ENCODE measurements at regions of chr11 and their contacts with region 1.

Region 1: GRCh38 chr11:6635082-6635932 is 16.1 kb upstream of the TPP1 start:
- DNase-seq: peak; percentile 98
- H3K4me3 ChIP-seq: peak overlapping the region in 1 of 3 experiments; percentile 37
- H3K27ac ChIP-seq: peak overlapping the region; percentile 91
- H3K4me1 ChIP-seq: peaks cover 47% of the 10 kb centered on the region
- H3K27me3 ChIP-seq: no peaks in the 10 kb centered on the region
- CTCF ChIP-seq: no peak
- POLR2A ChIP-seq: peak; percentile 83

Region 2: GRCh38 chr11:6481012-6481923 is 154.0 kb before region 1 on chr11 and contains the starts of genes ARFIP2 and TIMM10B:
- CTCF ChIA-PET with region 1: no interaction called
- POLR2A ChIA-PET with region 1: no interaction called
- dilution Hi-C with region 1: no loop called
- intact Hi-C with region 1: no loop called
- DNase-seq: peak; percentile 98
- H3K4me3 ChIP-seq: peak within 1 kb of the TSS; percentile 19 to 65 (median 57)
- H3K27ac ChIP-seq: peak within 1 kb of the TSS; percentile 72
- H3K4me1 ChIP-seq: peaks cover 18% of the 10 kb centered on the region
- H3K27me3 ChIP-seq: no peaks in the 10 kb centered on the region
- CTCF ChIP-seq: no peak
- POLR2A ChIP-seq: peak; percentile 70
- total RNA-seq, gene ARFIP2: 46.7 and 48.4 TPM in 2 replicates
- total RNA-seq, gene TIMM10B: 29.2 and 31.3 TPM in 2 replicates

Region 3: GRCh38 chr11:6568191-6568918 is 67.0 kb before region 1 on chr11:
- CTCF ChIA-PET with region 1: no interaction called
- POLR2A ChIA-PET with region 1: no interaction called
- dilution Hi-C with region 1: no loop called
- intact Hi-C with region 1: loop called (anchors 1 kb)
- DNase-seq: peak; percentile 66
- H3K4me3 ChIP-seq: no peak overlapping the region
- H3K27ac ChIP-seq: no peak overlapping the region
- H3K4me1 ChIP-seq: peaks cover 6% of the 10 kb centered on the region
- H3K27me3 ChIP-seq: no peaks in the 10 kb centered on the region
- CTCF ChIP-seq: no peak
- POLR2A ChIP-seq: no peak

Region 4: GRCh38 chr11:6612213-6613041 is 22.9 kb before region 1 on chr11 and contains the start of gene TAF10:
- CTCF ChIA-PET with region 1: interaction called, 8 read pairs
- POLR2A ChIA-PET with region 1: no interaction called
- dilution Hi-C with region 1: no loop called
- intact Hi-C with region 1: loop called (anchors 1 kb)
- DNase-seq: peak; percentile 97
- H3K4me3 ChIP-seq: peak within 1 kb of the TSS; percentile 28 to 72 (median 71)
- H3K27ac ChIP-seq: peak within 1 kb of the TSS; percentile 89
- H3K4me1 ChIP-seq: peaks cover 57% of the 10 kb centered on the region
- H3K27me3 ChIP-seq: no peaks in the 10 kb centered on the region
- CTCF ChIP-seq: peak; percentile 41 to 49
- POLR2A ChIP-seq: peak; percentile 92
- total RNA-seq, gene TAF10: 86.2 and 105 TPM in 2 replicates

Region 5: GRCh38 chr11:6646918-6647679 is 11.8 kb after region 1 on chr11:
- CTCF ChIA-PET with region 1: interaction called, 19 read pairs
- POLR2A ChIA-PET with region 1: interaction called, 11 read pairs
- dilution Hi-C with region 1: no loop called
- intact Hi-C with region 1: loop called (anchors 1 kb)
- DNase-seq: peak; percentile 67
- H3K4me3 ChIP-seq: no peak overlapping the region
- H3K27ac ChIP-seq: peak overlapping the region; percentile 84
- H3K4me1 ChIP-seq: peaks cover 37% of the 10 kb centered on the region
- H3K27me3 ChIP-seq: no peaks in the 10 kb centered on the region
- CTCF ChIP-seq: no peak
- POLR2A ChIP-seq: no peak

Region 6: DNA sequence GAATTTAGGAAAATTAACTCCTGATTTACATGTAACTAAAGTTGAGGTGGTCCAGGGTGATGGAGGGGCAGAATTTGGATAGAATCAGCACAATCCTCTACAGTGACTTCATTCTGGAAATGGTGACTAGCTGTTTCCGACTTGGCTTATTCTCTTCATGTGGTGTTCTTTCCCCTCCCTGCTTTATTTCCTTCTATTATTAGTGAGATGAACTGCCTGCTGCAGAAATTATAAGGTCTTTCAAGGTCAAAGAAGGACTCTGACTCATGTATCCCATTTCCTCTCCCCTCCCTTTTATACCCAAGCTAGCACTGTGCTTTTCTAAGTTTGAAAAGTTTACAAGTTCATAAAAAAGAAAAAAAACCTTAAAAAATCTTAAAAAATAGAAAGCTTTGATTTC is 60.1 kb after region 1 on chr11:
- CTCF ChIA-PET with region 1: interaction called, 9 read pairs
- POLR2A ChIA-PET with region 1: interaction called, 3 read pairs
- dilution Hi-C with region 1: no loop called
- intact Hi-C with region 1: loop called (anchors 1 kb)
- DNase-seq: peak; percentile 95
- H3K4me3 ChIP-seq: peak overlapping the region in 1 of 3 experiments; percentile 6
- H3K27ac ChIP-seq: peak overlapping the region; percentile 88
- H3K4me1 ChIP-seq: peaks cover 31% of the 10 kb centered on the region
- H3K27me3 ChIP-seq: no peaks in the 10 kb centered on the region
- CTCF ChIP-seq: no peak
- POLR2A ChIP-seq: no peak